PC-3 (cell line): ENCODE measurements at regions of chr2 and their contacts with region 1.

Region 1: GRCh38 chr2:97806738-97807618 is 93.6 kb downstream of the ZAP70 start:
- DNase-seq: peak; percentile 78
- ATAC-seq: peak; percentile 92
- H3K4me3 ChIP-seq: no peak overlapping the region
- H3K27ac ChIP-seq: no peak overlapping the region
- H3K4me1 ChIP-seq: peaks cover 7% of the 10 kb centered on the region; the same call in 1 of the 2 replicates
- H3K27me3 ChIP-seq: no peaks in the 10 kb centered on the region
- CTCF ChIP-seq: peak; percentile 92

Region 2: DNA sequence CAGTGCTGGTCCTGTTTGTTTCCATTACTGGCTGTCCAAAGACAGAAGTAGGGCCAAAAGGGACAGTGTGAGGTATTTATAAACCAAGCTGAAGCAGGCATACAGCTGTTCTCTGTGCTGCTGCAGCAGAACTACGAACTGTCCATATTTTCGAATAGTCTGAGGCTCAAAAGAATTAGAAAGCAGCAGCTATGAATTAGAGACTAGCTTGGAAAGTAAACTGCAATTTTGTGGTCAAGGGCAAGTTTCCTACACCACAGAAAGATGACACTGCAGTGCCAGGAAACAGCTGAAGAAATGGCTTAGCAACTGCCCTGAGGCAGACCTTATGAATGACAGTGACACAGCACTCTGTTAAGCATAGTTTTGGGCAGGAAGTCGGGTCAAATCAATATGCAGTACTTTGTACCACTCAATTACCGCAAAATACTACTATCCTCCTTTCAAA is 63.4 kb after region 1 on chr2:
- CTCF ChIA-PET with region 1: no interaction called
- POLR2A ChIA-PET with region 1: no interaction called
- intact Hi-C with region 1: loop called (anchors 2 kb)
- DNase-seq: peak; percentile 95
- ATAC-seq: peak; percentile 57
- H3K4me3 ChIP-seq: peak overlapping the region; percentile 50
- H3K27ac ChIP-seq: peak overlapping the region; percentile 100
- H3K4me1 ChIP-seq: peaks cover 57% of the 10 kb centered on the region
- H3K27me3 ChIP-seq: no peaks in the 10 kb centered on the region
- CTCF ChIP-seq: no peak

Region 3: GRCh38 chr2:97995734-97996624 is 189.0 kb after region 1 on chr2 and contains the start of gene TMEM131:
- CTCF ChIA-PET with region 1: no interaction called
- POLR2A ChIA-PET with region 1: interaction called, 5 read pairs
- intact Hi-C with region 1: loop called (anchors 1 kb)
- DNase-seq: peak; percentile 91
- ATAC-seq: peak; percentile 85
- H3K4me3 ChIP-seq: peak within 1 kb of the TSS; percentile 98
- H3K27ac ChIP-seq: peak within 1 kb of the TSS; percentile 75
- H3K4me1 ChIP-seq: peaks cover 43% of the 10 kb centered on the region
- H3K27me3 ChIP-seq: no peaks in the 10 kb centered on the region
- CTCF ChIP-seq: no peak
- total RNA-seq, gene TMEM131: 21.1 and 27.2 TPM in 2 replicates

Region 4: GRCh38 chr2:98157557-98157956 is 350.6 kb after region 1 on chr2:
- CTCF ChIA-PET with region 1: no interaction called
- POLR2A ChIA-PET with region 1: no interaction called
- intact Hi-C with region 1: loop called (anchors 1 kb)
- DNase-seq: peak; percentile 30
- ATAC-seq: peak; percentile 70
- H3K4me3 ChIP-seq: no peak overlapping the region
- H3K27ac ChIP-seq: no peak overlapping the region
- H3K4me1 ChIP-seq: no peaks in the 10 kb centered on the region
- H3K27me3 ChIP-seq: no peaks in the 10 kb centered on the region
- CTCF ChIP-seq: peak; percentile 42

Region 5: GRCh38 chr2:98385050-98385699 is 578.2 kb after region 1 on chr2:
- CTCF ChIA-PET with region 1: no interaction called
- POLR2A ChIA-PET with region 1: no interaction called
- intact Hi-C with region 1: loop called (anchors 2 kb)
- DNase-seq: peak; percentile 88
- ATAC-seq: peak; percentile 93
- H3K4me3 ChIP-seq: no peak overlapping the region
- H3K27ac ChIP-seq: no peak overlapping the region
- H3K4me1 ChIP-seq: no peaks in the 10 kb centered on the region
- H3K27me3 ChIP-seq: no peaks in the 10 kb centered on the region
- CTCF ChIP-seq: peak; percentile 97